Endothelial cell of umbilical vein (primary cell): ENCODE measurements at regions of chr6 and their contacts with region 1.

Region 1: GRCh38 chr6:82040405-82041221 is 206.9 kb downstream of the IBTK start:
- DNase-seq: peak; percentile 72
- H3K4me3 ChIP-seq: no peak overlapping the region
- H3K27ac ChIP-seq: no peak overlapping the region
- H3K4me1 ChIP-seq: peaks cover 9% of the 10 kb centered on the region
- H3K27me3 ChIP-seq: no peaks in the 10 kb centered on the region
- CTCF ChIP-seq: peak; percentile 73 to 76
- POLR2A ChIP-seq: no peak

Region 2: GRCh38 chr6:81241126-81242041 is 799.2 kb before region 1 on chr6:
- CTCF ChIA-PET with region 1: interaction called, 9 read pairs
- POLR2A ChIA-PET with region 1: no interaction called
- dilution Hi-C with region 1: no loop called
- intact Hi-C with region 1: loop called (anchors 1 kb)
- DNase-seq: peak; percentile 23
- H3K4me3 ChIP-seq: no peak overlapping the region
- H3K27ac ChIP-seq: no peak overlapping the region
- H3K4me1 ChIP-seq: no peaks in the 10 kb centered on the region
- H3K27me3 ChIP-seq: no peaks in the 10 kb centered on the region
- CTCF ChIP-seq: peak; percentile 24 to 29
- POLR2A ChIP-seq: no peak

Region 3: DNA sequence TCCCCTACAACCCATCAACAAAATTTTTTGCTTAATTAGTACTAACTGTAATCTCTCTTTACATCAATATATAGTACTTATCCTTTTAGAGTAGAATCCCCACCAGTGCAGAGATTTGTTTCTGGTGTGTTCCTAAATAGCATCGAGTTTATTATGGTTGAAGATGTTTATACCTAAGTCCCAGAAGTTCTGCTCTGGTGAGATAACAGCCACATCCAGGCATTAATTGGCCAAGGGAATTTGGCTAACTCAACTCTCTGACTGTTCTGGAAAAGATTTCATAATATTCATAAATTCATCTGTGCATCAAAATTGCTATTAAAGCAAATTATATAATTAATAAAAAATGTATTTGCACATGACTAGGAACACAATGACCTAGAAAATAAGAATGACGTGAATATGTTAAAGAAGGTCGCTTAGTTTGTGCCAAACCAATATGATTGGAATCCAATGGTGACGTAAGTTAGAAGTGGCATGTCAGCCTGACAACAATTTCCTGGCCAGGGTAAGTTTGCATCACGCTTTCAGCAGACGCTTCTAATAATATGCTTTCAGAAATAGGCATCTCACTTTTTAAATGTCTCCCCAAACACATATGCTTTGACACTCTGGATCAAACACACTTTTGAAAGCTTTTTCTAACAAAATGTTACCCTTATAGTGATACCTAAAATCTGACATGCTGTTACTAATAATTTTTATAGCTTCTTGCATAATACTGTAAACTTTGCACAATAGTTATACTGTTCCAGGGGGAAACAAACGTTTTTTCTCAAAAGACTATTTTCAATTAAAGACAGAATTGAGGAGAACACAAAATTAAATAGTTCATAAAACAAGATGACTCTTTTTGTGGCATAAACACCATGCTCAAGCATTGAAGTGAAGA is 524.8 kb before region 1 on chr6:
- CTCF ChIA-PET with region 1: no interaction called
- POLR2A ChIA-PET with region 1: no interaction called
- dilution Hi-C with region 1: no loop called
- intact Hi-C with region 1: no loop called
- DNase-seq: no peak
- H3K4me3 ChIP-seq: no peak overlapping the region
- H3K27ac ChIP-seq: no peak overlapping the region
- H3K4me1 ChIP-seq: no peaks in the 10 kb centered on the region
- H3K27me3 ChIP-seq: no peaks in the 10 kb centered on the region
- CTCF ChIP-seq: no peak
- POLR2A ChIP-seq: no peak

Region 4: DNA sequence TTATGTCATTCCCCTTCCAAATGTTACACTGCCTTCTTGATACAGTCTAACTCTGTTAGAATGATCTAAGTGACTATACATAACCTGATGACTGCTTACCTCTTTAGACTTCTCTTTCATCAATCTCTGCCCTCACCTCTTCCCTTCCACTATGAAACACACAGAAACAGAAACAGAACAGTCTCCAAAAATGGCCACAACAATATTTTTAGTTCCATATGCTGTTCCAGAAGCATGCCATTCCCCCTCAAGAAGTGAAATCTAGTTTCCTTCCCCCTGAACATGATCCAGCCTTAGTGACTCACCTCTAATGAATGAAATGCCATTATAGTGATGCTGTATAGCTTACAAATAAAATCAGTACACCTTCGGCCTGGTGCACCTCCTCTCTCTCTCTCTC is 58.8 kb before region 1 on chr6:
- CTCF ChIA-PET with region 1: interaction called, 13 read pairs
- POLR2A ChIA-PET with region 1: no interaction called
- dilution Hi-C with region 1: no loop called
- intact Hi-C with region 1: loop called (anchors 1 kb)
- DNase-seq: peak; percentile 68
- H3K4me3 ChIP-seq: no peak overlapping the region
- H3K27ac ChIP-seq: peak overlapping the region; percentile 66
- H3K4me1 ChIP-seq: peaks cover 15% of the 10 kb centered on the region
- H3K27me3 ChIP-seq: no peaks in the 10 kb centered on the region
- CTCF ChIP-seq: no peak
- POLR2A ChIP-seq: no peak

Region 5: DNA sequence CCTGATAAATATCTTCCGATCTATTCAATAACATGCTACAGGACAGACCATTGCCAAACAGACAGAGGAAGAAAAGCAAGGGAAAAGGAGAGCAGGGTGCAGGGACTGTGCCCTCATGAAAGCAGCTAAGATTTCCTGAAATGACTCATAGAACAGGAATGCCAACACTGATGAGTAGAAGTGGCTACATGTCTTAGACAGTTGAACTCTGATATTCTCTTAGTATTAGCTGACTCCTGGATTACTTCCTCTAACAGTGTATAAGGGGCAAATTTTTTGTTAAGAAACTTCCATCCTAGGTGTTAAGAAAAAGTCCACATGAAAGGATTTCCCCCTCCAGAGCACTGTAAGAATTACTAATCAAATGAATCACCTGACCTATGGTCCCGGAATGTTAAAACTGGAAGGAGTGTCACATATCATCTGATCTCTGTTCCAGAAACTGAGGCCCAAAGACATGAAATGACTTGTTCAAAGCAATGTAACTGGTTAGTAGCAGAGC is 18.0 kb before region 1 on chr6:
- CTCF ChIA-PET with region 1: interaction called, 30 read pairs
- POLR2A ChIA-PET with region 1: no interaction called
- dilution Hi-C with region 1: no loop called
- intact Hi-C with region 1: no loop called
- DNase-seq: peak; percentile 77
- H3K4me3 ChIP-seq: no peak overlapping the region
- H3K27ac ChIP-seq: peak overlapping the region; percentile 80
- H3K4me1 ChIP-seq: peaks cover 27% of the 10 kb centered on the region
- H3K27me3 ChIP-seq: no peaks in the 10 kb centered on the region
- CTCF ChIP-seq: no peak
- POLR2A ChIP-seq: peak; percentile 32

Region 6: GRCh38 chr6:82118150-82118562 is 77.5 kb after region 1 on chr6:
- CTCF ChIA-PET with region 1: no interaction called
- POLR2A ChIA-PET with region 1: no interaction called
- dilution Hi-C with region 1: no loop called
- intact Hi-C with region 1: no loop called
- DNase-seq: no peak
- H3K4me3 ChIP-seq: no peak overlapping the region
- H3K27ac ChIP-seq: no peak overlapping the region
- H3K4me1 ChIP-seq: no peaks in the 10 kb centered on the region
- H3K27me3 ChIP-seq: no peaks in the 10 kb centered on the region
- CTCF ChIP-seq: no peak
- POLR2A ChIP-seq: no peak

Region 7: DNA sequence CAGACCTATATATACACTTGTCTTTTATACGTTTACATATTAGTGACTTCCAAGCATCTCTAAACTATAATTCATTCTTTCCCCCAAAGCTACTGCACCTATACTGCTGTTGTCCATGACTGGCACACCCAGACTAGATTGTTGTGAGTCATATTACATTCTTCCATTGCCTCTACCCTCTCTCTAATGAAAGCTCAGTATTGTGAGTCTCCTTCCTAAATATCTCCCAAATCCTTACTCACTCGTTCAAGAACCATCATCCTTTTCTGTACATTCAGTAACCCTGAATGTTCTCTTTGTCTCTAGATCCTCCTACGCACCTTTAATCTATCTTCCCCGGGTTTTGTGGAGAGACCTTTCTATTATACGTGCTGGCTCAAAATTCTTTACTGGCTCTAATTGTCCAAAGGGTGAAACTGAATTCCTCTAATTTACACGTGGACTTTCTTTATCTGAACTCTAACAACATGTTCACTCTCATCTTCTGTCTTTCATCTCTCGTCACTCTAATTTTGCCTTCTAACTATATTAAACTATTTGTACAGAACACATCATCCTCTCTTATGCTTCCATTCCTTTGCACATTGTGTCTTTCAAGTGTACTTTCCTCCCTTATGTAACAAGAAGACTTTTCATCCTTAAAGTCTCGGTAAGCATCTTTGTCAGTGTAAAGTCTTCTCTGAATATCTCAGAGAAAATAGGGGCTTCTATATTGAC is 97.6 kb after region 1 on chr6:
- CTCF ChIA-PET with region 1: no interaction called
- POLR2A ChIA-PET with region 1: no interaction called
- dilution Hi-C with region 1: no loop called
- intact Hi-C with region 1: no loop called
- DNase-seq: no peak
- H3K4me3 ChIP-seq: no peak overlapping the region
- H3K27ac ChIP-seq: no peak overlapping the region
- H3K4me1 ChIP-seq: peaks cover 8% of the 10 kb centered on the region
- H3K27me3 ChIP-seq: no peaks in the 10 kb centered on the region
- CTCF ChIP-seq: no peak
- POLR2A ChIP-seq: no peak

Region 8: DNA sequence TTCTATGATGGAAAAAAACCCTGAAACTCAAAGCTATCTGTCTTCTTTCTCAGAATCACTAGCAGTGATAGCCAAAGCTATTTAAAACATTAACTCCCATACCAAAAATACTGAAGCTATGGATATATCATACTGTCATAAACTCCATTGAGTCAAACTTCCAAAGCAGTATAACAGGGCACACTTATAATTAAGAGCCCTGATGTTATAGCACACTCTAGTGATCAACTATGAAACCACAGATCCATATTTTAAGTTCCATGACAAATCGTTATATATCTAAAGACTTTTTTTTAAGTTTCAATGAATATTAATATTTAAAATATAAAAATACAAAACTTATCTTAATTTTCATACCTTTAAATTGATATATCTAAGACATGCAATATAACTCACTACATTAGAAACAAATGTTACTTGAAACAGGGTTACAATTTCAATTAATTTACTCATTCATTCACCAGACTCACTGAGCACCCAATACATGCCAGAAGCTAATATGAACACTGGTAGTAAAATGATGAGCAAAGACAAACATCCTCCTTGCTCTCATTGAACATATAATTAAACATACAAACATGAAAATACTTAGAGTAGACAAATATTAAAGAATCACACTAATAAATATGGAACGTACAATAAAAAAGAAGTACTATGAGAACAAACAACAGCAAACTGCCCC is 137.6 kb after region 1 on chr6:
- CTCF ChIA-PET with region 1: interaction called, 10 read pairs
- POLR2A ChIA-PET with region 1: no interaction called
- dilution Hi-C with region 1: no loop called
- intact Hi-C with region 1: no loop called
- DNase-seq: peak; percentile 56
- H3K4me3 ChIP-seq: no peak overlapping the region
- H3K27ac ChIP-seq: no peak overlapping the region
- H3K4me1 ChIP-seq: no peaks in the 10 kb centered on the region
- H3K27me3 ChIP-seq: no peaks in the 10 kb centered on the region
- CTCF ChIP-seq: peak; percentile 19 to 26
- POLR2A ChIP-seq: no peak

Region 9: GRCh38 chr6:82247634-82248232 is 207.1 kb after region 1 on chr6 and contains the start of gene IBTK:
- CTCF ChIA-PET with region 1: no interaction called
- POLR2A ChIA-PET with region 1: no interaction called
- dilution Hi-C with region 1: no loop called
- intact Hi-C with region 1: no loop called
- DNase-seq: peak; percentile 93
- H3K4me3 ChIP-seq: peak within 1 kb of the TSS; percentile 60 to 91 (median 67)
- H3K27ac ChIP-seq: peak within 1 kb of the TSS; percentile 67
- H3K4me1 ChIP-seq: peaks cover 35% of the 10 kb centered on the region
- H3K27me3 ChIP-seq: no peaks in the 10 kb centered on the region
- CTCF ChIP-seq: no peak
- POLR2A ChIP-seq: peak; percentile 87
- total RNA-seq, gene IBTK: 29.5 and 30.5 TPM in 2 replicates